CD8-positive, alpha-beta T cell (primary cell): ENCODE measurements at regions of chr17 and their contacts with region 1.

Region 1: GRCh38 chr17:80454557-80455335 is 21.7 kb downstream of the NPTX1 start:
- DNase-seq: peak; percentile 89 to 98 (median 95)
- ATAC-seq: peak; percentile 92
- H3K4me3 ChIP-seq: peak overlapping the region; percentile 82 to 92
- H3K4me3 Mint-ChIP-seq: peak overlapping the region; percentile 89
- H3K27ac ChIP-seq: peak overlapping the region; percentile 90 to 91
- H3K27ac Mint-ChIP-seq: peak overlapping the region; percentile 94
- H3K4me1 ChIP-seq: peaks cover 8% of the 10 kb centered on the region
- H3K4me1 Mint-ChIP-seq: peaks cover 16% of the 10 kb centered on the region
- H3K27me3 ChIP-seq: peaks cover 0 to 2% of the 10 kb centered on the region in 2 experiments
- H3K27me3 Mint-ChIP-seq: peaks cover 18% of the 10 kb centered on the region
- CTCF ChIP-seq: no peak

Region 2: GRCh38 chr17:80397686-80398085 is 57.1 kb before region 1 on chr17:
- CTCF ChIA-PET with region 1: no interaction called
- POLR2A ChIA-PET with region 1: no interaction called
- intact Hi-C with region 1: no loop called
- DNase-seq: no peak
- ATAC-seq: no peak
- H3K4me3 ChIP-seq: no peak overlapping the region
- H3K4me3 Mint-ChIP-seq: no peak overlapping the region
- H3K27ac ChIP-seq: no peak overlapping the region
- H3K27ac Mint-ChIP-seq: no peak overlapping the region
- H3K4me1 ChIP-seq: no peaks in the 10 kb centered on the region
- H3K4me1 Mint-ChIP-seq: peaks cover 7% of the 10 kb centered on the region
- H3K27me3 ChIP-seq: no peaks in the 10 kb centered on the region
- H3K27me3 Mint-ChIP-seq: no peaks in the 10 kb centered on the region
- CTCF ChIP-seq: no peak

Region 3: DNA sequence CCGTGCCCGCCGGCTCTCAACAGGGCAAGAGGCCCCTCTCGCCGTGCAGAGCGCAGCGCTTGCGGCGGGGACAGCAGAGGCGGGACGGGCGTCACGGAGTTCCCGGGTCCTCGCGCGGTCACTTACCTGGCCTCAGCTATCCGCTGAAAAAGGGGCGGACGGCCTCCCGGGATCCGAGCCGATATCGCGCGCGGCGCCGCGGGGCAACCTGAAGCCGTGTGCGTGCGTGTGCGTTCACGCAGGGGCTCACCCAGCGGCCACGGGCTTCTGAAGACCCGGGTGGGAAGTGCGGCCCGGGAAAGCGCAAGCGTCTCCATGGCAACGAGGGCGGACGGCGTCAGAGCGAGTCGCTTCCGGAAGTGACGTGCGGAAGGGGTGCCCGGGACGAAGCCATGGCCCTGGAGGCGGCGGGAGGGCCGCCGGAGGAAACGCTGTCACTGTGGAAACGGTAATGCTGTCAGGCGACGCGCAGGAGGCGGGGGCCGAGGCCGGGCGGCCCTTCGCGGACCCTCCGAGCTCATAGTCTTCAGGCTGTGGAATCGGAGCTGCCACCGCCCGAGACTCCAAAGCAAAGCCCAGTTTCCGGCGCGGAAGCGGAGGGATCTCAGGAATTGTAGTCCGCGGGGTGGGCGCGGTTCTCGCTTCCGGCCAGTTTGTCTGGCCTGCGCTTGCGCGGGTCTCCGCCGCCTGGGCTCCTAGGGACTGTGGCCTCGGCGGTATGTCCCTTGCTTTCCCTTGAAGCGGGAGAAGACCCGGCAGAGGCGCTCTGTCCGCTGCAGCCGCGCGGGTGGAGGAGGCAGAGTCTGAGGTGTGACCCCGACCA is 39.7 kb before region 1 on chr17 and contains the start of gene ENDOV:
- CTCF ChIA-PET with region 1: no interaction called
- POLR2A ChIA-PET with region 1: interaction called, 6 read pairs
- intact Hi-C with region 1: loop called in 1 of 2 experiments (anchors 1 kb)
- DNase-seq: peak; percentile 87 to 99 (median 95)
- ATAC-seq: peak; percentile 83
- H3K4me3 ChIP-seq: peak within 1 kb of the TSS; percentile 79 to 97
- H3K4me3 Mint-ChIP-seq: peak within 1 kb of the TSS; percentile 85
- H3K27ac ChIP-seq: peak within 1 kb of the TSS; percentile 82 to 87
- H3K27ac Mint-ChIP-seq: peak within 1 kb of the TSS; percentile 87
- H3K4me1 ChIP-seq: peaks cover 18% of the 10 kb centered on the region
- H3K4me1 Mint-ChIP-seq: peaks cover 26% of the 10 kb centered on the region
- H3K27me3 ChIP-seq: peaks cover 0 to 4% of the 10 kb centered on the region in 2 experiments
- H3K27me3 Mint-ChIP-seq: no peaks in the 10 kb centered on the region
- CTCF ChIP-seq: no peak
- total RNA-seq, gene ENDOV: 8.2 to 11.6 TPM

Region 4: GRCh38 chr17:80498242-80498919 is 43.6 kb after region 1 on chr17:
- CTCF ChIA-PET with region 1: no interaction called
- POLR2A ChIA-PET with region 1: no interaction called
- intact Hi-C with region 1: no loop called
- DNase-seq: no peak
- ATAC-seq: no peak
- H3K4me3 ChIP-seq: no peak overlapping the region
- H3K4me3 Mint-ChIP-seq: no peak overlapping the region
- H3K27ac ChIP-seq: no peak overlapping the region
- H3K27ac Mint-ChIP-seq: no peak overlapping the region
- H3K4me1 ChIP-seq: peaks cover 3% of the 10 kb centered on the region
- H3K4me1 Mint-ChIP-seq: peaks cover 9% of the 10 kb centered on the region
- H3K27me3 ChIP-seq: peaks cover 0 to 4% of the 10 kb centered on the region in 2 experiments
- H3K27me3 Mint-ChIP-seq: peaks cover 14% of the 10 kb centered on the region
- CTCF ChIP-seq: no peak

Region 5: GRCh38 chr17:80523956-80524712 is 69.4 kb after region 1 on chr17:
- CTCF ChIA-PET with region 1: no interaction called
- POLR2A ChIA-PET with region 1: no interaction called
- intact Hi-C with region 1: no loop called
- DNase-seq: no peak
- ATAC-seq: no peak
- H3K4me3 ChIP-seq: no peak overlapping the region
- H3K4me3 Mint-ChIP-seq: no peak overlapping the region
- H3K27ac ChIP-seq: no peak overlapping the region
- H3K27ac Mint-ChIP-seq: no peak overlapping the region
- H3K4me1 ChIP-seq: no peaks in the 10 kb centered on the region
- H3K4me1 Mint-ChIP-seq: no peaks in the 10 kb centered on the region
- H3K27me3 ChIP-seq: no peaks in the 10 kb centered on the region
- H3K27me3 Mint-ChIP-seq: peaks cover 31% of the 10 kb centered on the region
- CTCF ChIP-seq: no peak

Region 6: GRCh38 chr17:80544655-80545498 is 90.1 kb after region 1 on chr17 and contains the start of gene RPTOR:
- CTCF ChIA-PET with region 1: no interaction called
- POLR2A ChIA-PET with region 1: no interaction called
- intact Hi-C with region 1: loop called (anchors 1 to 10 kb)
- DNase-seq: peak; percentile 77 to 92 (median 87)
- ATAC-seq: peak; percentile 99
- H3K4me3 ChIP-seq: peak within 1 kb of the TSS; percentile 95
- H3K4me3 Mint-ChIP-seq: peak within 1 kb of the TSS; percentile 94
- H3K27ac ChIP-seq: peak within 1 kb of the TSS; percentile 61 to 71
- H3K27ac Mint-ChIP-seq: peak within 1 kb of the TSS; percentile 92
- H3K4me1 ChIP-seq: peaks cover 14% of the 10 kb centered on the region
- H3K4me1 Mint-ChIP-seq: peaks cover 32% of the 10 kb centered on the region
- H3K27me3 ChIP-seq: no peaks in the 10 kb centered on the region
- H3K27me3 Mint-ChIP-seq: peaks cover 12% of the 10 kb centered on the region
- CTCF ChIP-seq: no peak
- total RNA-seq, gene RPTOR: 44.5 to 48.3 TPM

Region 7: DNA sequence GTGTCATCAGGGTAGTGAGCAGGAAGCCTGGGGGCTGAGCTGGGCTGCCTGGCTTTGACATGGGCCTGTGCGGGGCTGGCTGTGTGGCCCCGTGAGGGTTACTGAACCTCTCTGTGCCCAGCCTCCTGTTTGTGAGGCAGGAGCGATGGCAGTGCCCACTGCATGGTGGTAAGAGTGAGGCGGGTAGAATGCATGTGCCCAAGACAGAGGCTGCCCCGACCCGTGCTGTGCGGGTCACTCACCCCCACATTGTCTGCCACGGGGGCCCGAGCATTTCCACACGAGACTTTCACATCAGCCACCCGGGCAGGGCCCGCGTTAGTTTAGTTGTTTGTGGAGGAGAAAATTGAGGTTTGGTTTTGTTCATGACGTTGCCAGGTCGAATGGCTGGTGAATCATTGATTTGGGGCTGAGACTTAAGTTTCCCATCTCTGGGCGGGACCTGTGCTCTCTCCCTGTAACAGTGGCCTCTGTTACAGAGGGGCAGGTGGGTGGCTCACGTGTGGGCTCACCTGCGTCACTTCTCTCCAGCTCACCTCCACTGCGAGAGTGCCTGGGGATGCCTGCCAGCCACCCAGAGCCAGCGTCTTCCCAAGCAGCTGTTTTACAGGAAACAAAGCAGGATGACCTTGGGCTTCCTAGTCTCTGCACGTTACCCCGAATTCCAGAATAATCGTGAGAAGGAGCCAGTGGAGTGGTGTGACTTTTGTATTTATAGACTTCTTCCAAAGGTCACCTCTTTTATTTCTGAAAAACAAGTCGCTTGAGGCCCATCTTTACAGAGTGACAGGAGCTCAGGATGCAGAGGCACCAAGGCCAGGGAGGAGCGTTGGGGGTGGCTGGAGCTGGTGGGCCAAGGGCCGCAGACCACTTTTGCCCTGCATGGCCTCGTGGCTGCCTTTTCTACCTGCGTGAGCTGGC is 240.5 kb after region 1 on chr17:
- CTCF ChIA-PET with region 1: no interaction called
- POLR2A ChIA-PET with region 1: no interaction called
- intact Hi-C with region 1: no loop called
- DNase-seq: peak in 1 of 9 experiments; percentile 21
- ATAC-seq: peak; percentile 58
- H3K4me3 ChIP-seq: no peak overlapping the region
- H3K4me3 Mint-ChIP-seq: no peak overlapping the region
- H3K27ac ChIP-seq: no peak overlapping the region
- H3K27ac Mint-ChIP-seq: peak overlapping the region; percentile 85
- H3K4me1 ChIP-seq: peaks cover 11% of the 10 kb centered on the region
- H3K4me1 Mint-ChIP-seq: peaks cover 40% of the 10 kb centered on the region
- H3K27me3 ChIP-seq: no peaks in the 10 kb centered on the region
- H3K27me3 Mint-ChIP-seq: no peaks in the 10 kb centered on the region
- CTCF ChIP-seq: no peak

Region 8: GRCh38 chr17:80991645-80992076 is 536.9 kb after region 1 on chr17 and contains the start of gene CHMP6:
- CTCF ChIA-PET with region 1: no interaction called
- POLR2A ChIA-PET with region 1: no interaction called
- intact Hi-C with region 1: loop called in 1 of 2 experiments (anchors 1 kb)
- DNase-seq: peak; percentile 48 to 86 (median 70)
- ATAC-seq: peak; percentile 69
- H3K4me3 ChIP-seq: peak within 1 kb of the TSS; percentile 74 to 84
- H3K4me3 Mint-ChIP-seq: peak within 1 kb of the TSS; percentile 81
- H3K27ac ChIP-seq: peak within 1 kb of the TSS; percentile 59 to 84
- H3K27ac Mint-ChIP-seq: peak within 1 kb of the TSS; percentile 84
- H3K4me1 ChIP-seq: peaks cover 32% of the 10 kb centered on the region
- H3K4me1 Mint-ChIP-seq: peaks cover 20% of the 10 kb centered on the region
- H3K27me3 ChIP-seq: no peaks in the 10 kb centered on the region
- H3K27me3 Mint-ChIP-seq: no peaks in the 10 kb centered on the region
- CTCF ChIP-seq: no peak
- total RNA-seq, gene CHMP6: 10.6 to 11.5 TPM